ENCODE measurements at regions of chr17 and their contacts with region 1.

Region 1: GRCh38 chr17:47889734-47890529 is 6.1 kb upstream of the SP2 start:
- DNase-seq: peak; percentile 96
- ATAC-seq: peak; percentile 99
- H3K4me3 Mint-ChIP-seq: no peak overlapping the region
- H3K27ac Mint-ChIP-seq: no peak overlapping the region
- H3K4me1 Mint-ChIP-seq: peaks cover 23% of the 10 kb centered on the region
- H3K27me3 Mint-ChIP-seq: no peaks in the 10 kb centered on the region

Region 2: DNA sequence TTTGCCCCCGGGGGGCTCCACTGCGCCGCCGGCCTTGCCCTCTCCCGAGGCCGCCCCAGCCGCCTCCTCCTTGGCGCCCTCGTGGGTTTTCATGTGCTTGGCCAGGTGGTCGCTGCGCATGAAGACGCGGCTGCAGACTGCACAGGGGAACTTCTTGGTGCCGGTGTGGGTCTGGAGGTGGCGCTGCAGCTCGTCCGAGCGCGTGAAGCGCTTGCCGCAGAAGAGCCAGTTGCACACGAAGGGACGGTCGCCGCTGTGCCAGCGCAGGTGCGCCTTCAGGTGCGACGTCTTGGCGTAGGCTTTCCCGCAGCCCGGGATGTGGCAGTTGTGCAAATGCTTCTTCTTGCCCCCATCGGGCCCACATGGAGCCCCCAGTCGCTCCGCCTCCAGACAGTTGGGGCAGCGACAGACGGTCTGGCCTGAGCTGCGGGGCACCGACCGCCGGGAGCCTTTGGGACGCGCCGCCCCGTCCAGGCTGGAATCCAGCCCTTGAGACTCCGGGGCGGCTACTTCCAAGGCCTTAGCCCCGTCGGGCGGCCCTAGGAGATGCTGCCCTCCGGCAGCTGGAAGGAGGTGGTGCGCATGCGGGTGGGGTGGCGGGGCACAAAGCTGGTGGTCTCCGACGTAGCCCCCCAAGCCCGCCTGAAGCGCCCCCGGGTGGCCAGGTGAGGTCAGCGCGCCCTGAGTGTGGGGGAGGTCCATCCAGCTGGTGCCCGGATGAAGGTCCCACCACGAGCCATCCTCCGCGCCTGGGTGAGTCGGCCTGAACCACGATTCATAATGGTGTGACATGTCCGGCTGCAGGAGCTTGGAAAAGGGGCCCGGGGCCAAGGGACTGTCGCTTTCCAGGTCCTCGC is 42.4 kb before region 1 on chr17:
- CTCF ChIA-PET with region 1: interaction called, 414 read pairs
- POLR2A ChIA-PET with region 1: interaction called, 4 read pairs
- intact Hi-C with region 1: loop called in 1 of 2 experiments (anchors 1 kb)
- DNase-seq: peak; percentile 67
- ATAC-seq: peak; percentile 53
- H3K4me3 Mint-ChIP-seq: no peak overlapping the region
- H3K27ac Mint-ChIP-seq: no peak overlapping the region
- H3K4me1 Mint-ChIP-seq: peaks cover 20% of the 10 kb centered on the region
- H3K27me3 Mint-ChIP-seq: peaks cover 61% of the 10 kb centered on the region

Region 3: DNA sequence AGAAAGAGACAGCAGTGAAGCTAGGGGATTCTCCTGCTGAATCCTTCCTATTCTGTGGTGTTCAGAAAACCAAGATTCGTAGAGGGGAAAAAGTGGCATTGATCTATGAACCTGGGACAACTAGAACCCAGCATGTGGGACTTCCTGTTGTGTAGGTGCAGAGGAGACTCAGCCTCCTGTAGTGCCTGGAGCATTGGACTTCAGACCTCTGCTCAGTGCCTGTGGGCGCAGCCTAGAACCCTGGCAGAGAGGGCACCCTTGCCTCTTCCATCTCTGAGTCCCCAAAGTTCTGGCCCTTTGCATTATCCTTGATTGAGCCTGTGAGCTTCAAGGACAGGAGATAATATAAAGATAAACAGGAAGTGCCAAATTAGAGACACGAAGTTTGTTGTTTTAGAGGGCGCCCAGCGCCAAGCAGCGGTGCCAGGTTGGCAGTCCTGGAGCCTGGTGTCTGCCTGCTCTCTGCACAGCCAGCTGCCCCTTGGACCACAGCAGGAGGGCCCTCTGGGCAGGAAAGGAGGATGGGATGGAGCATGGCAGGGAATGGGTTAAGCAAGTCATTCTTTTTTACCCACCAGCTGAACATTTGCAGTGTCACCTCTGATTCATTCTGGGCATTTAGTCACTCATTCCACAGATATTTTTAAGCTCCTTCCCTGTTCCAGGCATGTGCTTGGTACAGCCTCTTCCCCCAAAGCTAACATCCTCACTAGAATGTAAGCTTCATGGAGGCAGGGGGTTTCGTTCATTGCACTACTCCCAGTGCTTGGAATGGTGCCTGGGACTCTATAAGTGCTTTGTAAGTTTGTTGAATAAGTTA is 27.1 kb before region 1 on chr17:
- CTCF ChIA-PET with region 1: interaction called, 414 read pairs
- POLR2A ChIA-PET with region 1: no interaction called
- intact Hi-C with region 1: no loop called
- DNase-seq: no peak
- ATAC-seq: peak; percentile 22
- H3K4me3 Mint-ChIP-seq: no peak overlapping the region
- H3K27ac Mint-ChIP-seq: no peak overlapping the region
- H3K4me1 Mint-ChIP-seq: peaks cover 27% of the 10 kb centered on the region
- H3K27me3 Mint-ChIP-seq: peaks cover 7% of the 10 kb centered on the region

Region 4: DNA sequence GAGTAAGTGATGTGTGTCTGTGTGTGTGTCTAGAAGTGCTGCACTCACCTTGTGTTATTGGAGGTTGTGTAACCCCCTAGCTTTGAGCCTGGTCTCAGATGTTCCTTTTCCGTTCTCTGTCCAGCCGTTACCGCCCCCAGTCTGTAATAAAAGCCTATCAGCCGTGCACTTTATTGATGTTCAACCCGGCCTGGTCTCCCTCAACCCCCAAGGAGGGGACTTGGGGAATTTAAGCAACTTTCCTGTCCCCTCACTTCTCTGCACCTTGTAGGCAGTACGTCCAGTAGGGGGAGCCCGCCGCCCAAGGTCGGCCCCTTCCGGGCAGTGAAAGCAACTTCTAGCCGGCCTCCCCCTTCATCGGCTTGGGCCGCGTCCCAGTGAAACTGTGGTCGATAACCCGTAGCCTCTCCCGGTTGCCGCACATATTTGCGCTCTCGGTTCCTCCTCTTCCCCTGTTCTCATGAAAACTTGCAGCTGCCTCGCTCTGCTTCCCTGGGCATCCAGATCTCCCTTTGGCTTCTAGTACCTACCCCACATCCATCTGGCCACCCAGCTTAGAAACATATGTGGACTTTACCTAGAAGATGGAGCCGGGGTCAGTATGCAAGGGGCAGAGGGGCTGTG is 59.3 kb after region 1 on chr17:
- CTCF ChIA-PET with region 1: interaction called, 11 read pairs
- POLR2A ChIA-PET with region 1: interaction called, 5 read pairs
- intact Hi-C with region 1: no loop called
- DNase-seq: peak; percentile 91
- ATAC-seq: peak; percentile 75
- H3K4me3 Mint-ChIP-seq: peak overlapping the region; percentile 30
- H3K27ac Mint-ChIP-seq: peak overlapping the region; percentile 66
- H3K4me1 Mint-ChIP-seq: peaks cover 43% of the 10 kb centered on the region
- H3K27me3 Mint-ChIP-seq: no peaks in the 10 kb centered on the region

Region 5: DNA sequence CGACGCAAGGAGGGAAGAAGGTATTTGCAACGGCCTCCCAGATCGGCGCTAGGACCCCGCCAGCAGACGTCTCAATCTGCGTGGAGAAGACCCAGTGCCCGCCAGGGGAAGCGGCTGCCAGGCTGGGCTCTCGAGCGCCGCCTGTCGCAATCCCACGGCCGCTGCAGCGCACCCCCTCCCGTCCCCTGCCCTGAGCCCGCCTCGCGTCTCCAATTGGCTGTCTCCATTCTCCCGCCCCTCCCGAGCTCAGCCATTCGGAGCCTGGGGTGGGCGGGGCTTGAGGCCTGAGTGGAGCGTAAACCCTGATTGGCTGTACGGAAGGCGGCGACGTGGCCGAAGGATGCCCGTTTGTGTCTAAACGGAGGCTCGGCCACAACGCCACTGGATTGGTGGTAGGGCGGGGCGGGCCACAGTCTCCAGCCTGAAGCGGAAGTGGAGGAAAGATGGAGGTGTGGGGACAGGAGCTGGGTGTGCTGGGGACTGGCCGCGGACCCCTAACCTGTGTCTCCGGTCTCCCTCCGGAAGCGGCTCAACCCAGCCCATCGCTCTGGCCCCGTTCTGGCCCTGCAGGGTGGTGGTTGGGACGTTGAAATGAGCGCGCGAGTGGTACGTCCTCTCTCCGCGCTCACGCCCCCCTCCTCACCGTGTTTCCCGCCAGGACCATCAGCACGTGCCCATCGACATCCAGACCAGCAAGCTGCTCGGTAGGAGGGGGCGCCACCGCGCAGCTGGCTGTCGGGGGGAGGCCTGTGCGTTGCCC is 81.0 kb after region 1 on chr17 and contains the start of gene CDK5RAP3:
- CTCF ChIA-PET with region 1: interaction called, 16 read pairs
- POLR2A ChIA-PET with region 1: interaction called, 22 read pairs
- intact Hi-C with region 1: no loop called
- DNase-seq: peak; percentile 100
- ATAC-seq: peak; percentile 100
- H3K4me3 Mint-ChIP-seq: peak within 1 kb of the TSS; percentile 97
- H3K27ac Mint-ChIP-seq: peak within 1 kb of the TSS; percentile 94
- H3K4me1 Mint-ChIP-seq: peaks cover 21% of the 10 kb centered on the region
- H3K27me3 Mint-ChIP-seq: no peaks in the 10 kb centered on the region
- total RNA-seq, gene CDK5RAP3: 147 to 156 TPM

Measured in activated CD4-positive, alpha-beta T cell treated with anti-CD3 and anti-CD28 coated beads for 36 hours (primary cell).